ENCODE measurements at regions of chr2 and their contacts with region 1.

Region 1: DNA sequence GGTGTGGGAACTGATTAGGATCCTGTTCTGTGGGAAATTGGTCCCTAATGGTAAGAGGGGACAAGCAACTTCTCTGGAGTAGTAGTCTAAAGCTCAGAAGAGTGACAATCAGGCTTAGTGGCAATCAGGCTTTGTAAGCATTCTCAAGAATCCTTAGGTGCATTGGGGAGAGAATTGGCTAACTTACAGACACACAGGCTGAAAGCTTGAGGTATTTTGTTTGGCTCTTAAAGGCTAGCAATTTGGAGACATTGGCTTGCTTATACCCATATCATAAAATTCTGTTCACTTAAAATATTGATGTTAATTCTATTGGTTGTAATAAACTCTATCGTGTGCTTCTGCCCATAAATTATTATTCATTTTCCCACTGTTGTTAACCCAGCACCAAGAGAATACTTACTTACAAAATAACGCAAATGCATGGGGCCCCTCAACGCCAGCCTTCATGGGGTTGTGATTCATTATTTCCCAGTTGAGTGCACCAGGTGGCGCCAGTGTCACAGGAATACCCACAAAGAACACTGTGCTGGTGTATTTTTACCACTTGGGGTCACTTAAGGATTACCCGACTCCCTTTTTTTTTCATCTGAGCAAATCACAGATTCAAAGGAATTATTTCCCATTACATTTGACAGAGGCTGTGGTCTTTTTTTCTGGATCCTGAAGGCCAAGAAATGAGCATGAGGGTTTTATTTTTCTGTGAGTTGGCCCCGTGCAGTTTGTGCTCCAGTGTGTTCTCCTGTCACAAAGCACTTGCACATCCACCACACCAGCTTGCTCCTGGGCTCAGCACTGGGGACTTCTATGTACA is 45.5 kb downstream of the DDX1 start:
- DNase-seq: peak; percentile 66 to 88 (median 74)
- ATAC-seq: peak; percentile 85 to 86
- H3K4me3 ChIP-seq: no peak overlapping the region
- H3K27ac ChIP-seq: no peak overlapping the region
- H3K4me1 ChIP-seq: no peaks in the 10 kb centered on the region
- H3K27me3 ChIP-seq: no peaks in the 10 kb centered on the region

Region 2: GRCh38 chr2:14923820-14924580 is 713.2 kb before region 1 on chr2:
- intact Hi-C with region 1: no loop called
- DNase-seq: no peak
- ATAC-seq: no peak
- H3K4me3 ChIP-seq: no peak overlapping the region
- H3K27ac ChIP-seq: no peak overlapping the region
- H3K4me1 ChIP-seq: no peaks in the 10 kb centered on the region
- H3K27me3 ChIP-seq: no peaks in the 10 kb centered on the region

Region 3: DNA sequence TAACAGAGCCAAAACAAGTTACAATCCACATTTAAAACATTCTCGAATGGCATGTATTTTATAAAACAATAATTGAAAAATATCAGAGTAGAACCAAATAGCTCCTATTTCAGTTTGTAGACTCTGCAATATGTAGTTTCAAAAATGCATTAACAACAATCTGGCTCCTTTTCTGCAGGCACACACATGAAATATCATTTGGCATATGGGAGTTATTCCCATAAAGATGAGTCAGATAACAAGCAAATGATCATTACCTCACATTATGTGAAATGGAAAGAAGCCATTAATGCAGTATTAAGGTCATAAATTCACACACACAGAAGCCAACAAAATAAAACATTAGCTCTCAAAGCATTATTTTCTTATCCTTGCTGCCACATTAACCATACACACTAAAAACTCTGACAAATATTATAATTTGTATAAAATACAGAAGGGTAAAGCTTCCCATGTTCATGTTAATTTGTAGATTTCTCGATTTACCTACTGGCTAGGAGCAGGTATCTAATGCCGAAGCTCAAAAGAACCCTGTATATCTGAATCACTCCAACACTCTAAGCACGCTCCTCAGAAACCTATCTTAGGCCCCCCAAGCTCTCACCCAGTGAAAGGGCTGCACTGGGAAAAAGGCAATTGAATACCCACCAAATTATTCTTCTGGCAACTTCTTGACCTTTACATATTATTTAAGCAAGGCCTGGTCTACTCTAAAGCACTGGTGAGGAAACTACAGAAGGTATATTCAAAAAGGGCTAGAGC is 89.9 kb before region 1 on chr2:
- intact Hi-C with region 1: no loop called
- DNase-seq: no peak
- ATAC-seq: no peak
- H3K4me3 ChIP-seq: no peak overlapping the region
- H3K27ac ChIP-seq: no peak overlapping the region
- H3K4me1 ChIP-seq: no peaks in the 10 kb centered on the region
- H3K27me3 ChIP-seq: no peaks in the 10 kb centered on the region

Region 4: GRCh38 chr2:16281451-16282336 is 644.5 kb after region 1 on chr2:
- intact Hi-C with region 1: loop called in 3 of 4 experiments (anchors 5 to 10 kb)
- DNase-seq: no peak
- ATAC-seq: peak; percentile 69 to 74
- H3K4me3 ChIP-seq: no peak overlapping the region
- H3K27ac ChIP-seq: no peak overlapping the region
- H3K4me1 ChIP-seq: no peaks in the 10 kb centered on the region
- H3K27me3 ChIP-seq: no peaks in the 10 kb centered on the region

Region 5: DNA sequence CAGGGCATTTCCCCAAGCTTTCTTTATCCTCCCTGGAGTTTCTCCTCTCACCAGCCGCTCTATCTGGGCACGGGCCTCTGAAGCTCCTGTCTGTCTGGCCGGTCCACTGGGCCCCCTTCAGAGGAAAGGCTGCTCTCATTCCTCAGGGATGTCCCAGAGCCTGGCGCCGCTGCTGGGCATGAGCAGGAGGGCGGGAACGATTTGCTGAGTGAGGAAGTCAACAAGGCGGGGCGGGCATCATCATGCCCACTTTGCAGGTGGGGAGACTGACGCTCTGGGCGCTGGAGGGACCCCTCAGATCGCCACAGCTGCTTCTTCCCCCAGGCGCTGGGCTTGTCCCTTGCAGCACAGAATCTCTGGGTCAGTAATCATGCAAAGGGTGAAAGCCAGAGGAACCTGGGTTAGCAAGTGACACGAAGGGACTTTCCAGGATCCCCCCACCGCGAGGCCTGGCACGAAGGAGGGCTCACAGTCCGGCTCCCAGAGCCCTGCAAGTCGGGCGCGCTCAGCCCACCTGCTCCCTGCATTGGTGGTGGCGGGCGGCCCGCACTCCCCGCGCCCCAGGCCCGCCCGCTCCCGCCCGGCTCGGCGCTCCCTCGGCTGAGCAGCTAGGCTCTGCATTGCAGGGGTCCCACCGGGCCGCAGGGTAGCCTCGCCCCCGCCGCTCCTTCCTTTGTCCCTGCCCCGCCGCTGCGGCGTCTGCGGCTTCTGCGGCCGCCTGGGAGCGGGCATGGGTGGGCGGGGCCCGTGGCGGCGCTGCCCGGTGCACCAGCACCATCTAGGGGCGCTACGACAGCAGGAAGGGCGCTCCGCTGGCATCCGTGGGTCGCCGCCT is 870.7 kb after region 1 on chr2:
- intact Hi-C with region 1: loop called in 2 of 4 experiments (anchors 5 to 10 kb)
- DNase-seq: peak; percentile 34 to 72 (median 67)
- ATAC-seq: peak; percentile 89 to 91
- H3K4me3 ChIP-seq: peak overlapping the region; percentile 52
- H3K27ac ChIP-seq: no peak overlapping the region
- H3K4me1 ChIP-seq: no peaks in the 10 kb centered on the region
- H3K27me3 ChIP-seq: no peaks in the 10 kb centered on the region

Region 6: DNA sequence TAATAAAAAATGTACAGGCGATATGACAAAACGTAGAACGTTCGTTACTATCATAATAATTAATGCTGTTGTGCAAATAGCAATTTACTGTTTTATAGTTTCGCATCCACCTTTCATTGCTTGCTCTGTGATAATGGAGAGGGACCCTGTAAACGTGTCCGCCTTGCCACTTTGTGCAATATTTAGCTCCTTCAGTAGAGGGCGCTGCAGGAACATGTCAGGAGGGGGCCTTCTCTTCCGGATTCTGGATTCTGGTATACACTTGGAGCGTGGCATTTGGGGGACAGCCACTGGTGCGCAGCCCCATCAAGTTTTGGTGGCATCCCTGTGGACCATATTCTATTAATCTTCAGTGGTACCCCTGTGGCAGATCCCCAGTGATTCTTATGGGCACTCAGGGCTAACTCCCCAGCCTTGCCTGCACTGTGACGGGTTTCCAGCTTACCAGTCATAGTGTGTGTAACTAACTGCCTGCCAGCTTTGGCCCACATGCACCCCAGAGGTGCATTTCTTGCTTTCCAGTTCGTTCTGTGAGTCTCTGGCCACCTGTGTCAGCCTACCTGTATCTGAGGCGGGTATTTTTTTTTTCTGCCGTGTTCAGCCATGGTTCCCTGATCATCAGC is 888.2 kb after region 1 on chr2:
- intact Hi-C with region 1: no loop called
- DNase-seq: peak in 1 of 3 donors; percentile 48
- ATAC-seq: no peak
- H3K4me3 ChIP-seq: no peak overlapping the region
- H3K27ac ChIP-seq: no peak overlapping the region
- H3K4me1 ChIP-seq: peaks cover 6% of the 10 kb centered on the region
- H3K27me3 ChIP-seq: no peaks in the 10 kb centered on the region

Measured in right cardiac atrium (tissue), 5 donors.